Panc1 (cell line): ENCODE measurements at regions of chr17 and their contacts with region 1.

Region 1: GRCh38 chr17:49670641-49671040 is 7.3 kb downstream of the SPOP start:
- DNase-seq: no peak
- ATAC-seq: no peak
- H3K4me3 ChIP-seq: no peak overlapping the region
- H3K27ac ChIP-seq: no peak overlapping the region
- H3K4me1 ChIP-seq: no peaks in the 10 kb centered on the region; the same call in 1 of the 2 replicates
- H3K27me3 ChIP-seq: no peaks in the 10 kb centered on the region
- CTCF ChIP-seq: no peak

Region 2: GRCh38 chr17:49637050-49637449 is 33.6 kb before region 1 on chr17:
- CTCF ChIA-PET with region 1: no interaction called
- POLR2A ChIA-PET with region 1: no interaction called
- in situ Hi-C with region 1: loop called (anchors 5 kb)
- intact Hi-C with region 1: no loop called
- DNase-seq: no peak
- ATAC-seq: no peak
- H3K4me3 ChIP-seq: no peak overlapping the region
- H3K27ac ChIP-seq: no peak overlapping the region
- H3K4me1 ChIP-seq: no peaks in the 10 kb centered on the region
- H3K27me3 ChIP-seq: no peaks in the 10 kb centered on the region
- CTCF ChIP-seq: no peak

Region 3: DNA sequence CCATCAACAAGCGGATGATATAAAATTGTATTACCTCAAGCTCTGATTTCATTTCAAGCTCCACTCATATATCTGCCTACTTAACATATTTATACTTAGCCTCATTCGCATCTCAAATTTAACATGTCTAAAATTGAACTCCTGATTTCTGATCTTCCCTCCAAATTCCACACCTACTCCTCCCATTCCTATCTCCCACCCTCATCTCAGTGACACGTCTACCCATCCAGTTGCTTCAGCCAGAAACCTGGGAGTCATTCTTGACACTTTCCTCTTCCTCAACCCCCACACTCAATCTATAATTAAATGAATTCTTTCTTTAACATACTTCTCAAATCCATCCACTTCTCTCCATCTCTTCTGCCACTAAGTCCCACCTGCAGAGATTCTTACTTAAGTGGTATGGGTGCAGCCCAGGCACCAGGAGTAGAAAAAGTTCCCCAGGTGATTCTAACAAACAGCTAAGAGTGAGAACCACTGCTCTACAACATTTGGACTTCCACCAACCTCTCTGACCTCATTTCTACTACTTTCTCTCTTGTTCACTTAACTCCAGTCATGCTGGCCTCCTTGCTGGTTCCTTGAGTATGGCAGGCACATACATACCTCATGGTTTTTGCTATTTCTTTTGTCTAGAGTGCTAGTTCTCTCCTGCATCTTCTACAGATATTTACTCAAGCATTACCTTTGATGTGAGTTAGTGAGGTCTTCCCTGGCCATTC is 10.8 kb before region 1 on chr17:
- CTCF ChIA-PET with region 1: no interaction called
- POLR2A ChIA-PET with region 1: interaction called, 11 read pairs
- in situ Hi-C with region 1: no loop called
- intact Hi-C with region 1: no loop called
- DNase-seq: no peak
- ATAC-seq: no peak
- H3K4me3 ChIP-seq: no peak overlapping the region
- H3K27ac ChIP-seq: no peak overlapping the region
- H3K4me1 ChIP-seq: no peaks in the 10 kb centered on the region
- H3K27me3 ChIP-seq: no peaks in the 10 kb centered on the region
- CTCF ChIP-seq: no peak

Region 4: GRCh38 chr17:50478391-50479381 is 808.0 kb after region 1 on chr17 and contains the start of gene RSAD1:
- CTCF ChIA-PET with region 1: no interaction called
- POLR2A ChIA-PET with region 1: no interaction called
- in situ Hi-C with region 1: no loop called
- intact Hi-C with region 1: no loop called
- DNase-seq: no peak
- ATAC-seq: peak; percentile 89
- H3K4me3 ChIP-seq: peak within 1 kb of the TSS; percentile 88 to 98
- H3K27ac ChIP-seq: peak within 1 kb of the TSS; percentile 93
- H3K4me1 ChIP-seq: peaks cover 30% of the 10 kb centered on the region
- H3K27me3 ChIP-seq: no peaks in the 10 kb centered on the region
- CTCF ChIP-seq: peak; percentile 100
- total RNA-seq, gene RSAD1: 40.2 TPM